Thyroid gland (tissue), 4 donors: ENCODE measurements at regions of chr12 and their contacts with region 1.

Region 1: DNA sequence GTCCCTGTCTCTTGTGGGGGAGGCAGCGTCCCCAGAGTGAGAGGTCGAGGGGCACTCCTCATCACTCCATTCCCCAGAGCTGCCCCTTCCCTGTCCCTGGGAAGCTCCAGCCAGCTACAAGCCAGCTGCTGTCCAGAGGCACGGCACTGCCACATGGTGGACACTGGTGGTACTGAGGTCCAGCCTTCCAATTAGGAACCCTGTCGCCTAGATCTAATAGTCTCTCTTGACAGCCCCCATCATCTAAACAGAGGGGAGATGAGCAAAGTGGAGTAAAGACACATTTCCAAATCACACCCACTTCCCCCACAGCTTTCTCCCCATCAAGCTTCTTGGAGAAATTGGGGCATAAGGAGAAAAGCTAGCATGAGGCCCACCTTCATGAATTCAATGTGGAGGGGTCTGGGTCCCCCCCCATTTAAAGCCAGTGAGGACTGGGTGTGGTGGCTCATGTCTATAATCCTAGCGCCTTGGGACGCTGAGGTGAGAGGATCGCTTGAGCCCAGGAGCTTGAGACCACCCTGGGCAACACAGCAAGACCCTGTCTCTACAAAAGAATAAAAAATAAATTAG is 2.1 kb upstream of the INHBE start:
- DNase-seq: peak; percentile 81
- H3K4me3 ChIP-seq: no peak overlapping the region
- H3K27ac ChIP-seq: no peak overlapping the region
- H3K4me1 ChIP-seq: no peaks in the 10 kb centered on the region
- H3K27me3 ChIP-seq: no peaks in the 10 kb centered on the region
- CTCF ChIP-seq: peak; percentile 76 to 95 (median 90)
- POLR2A ChIP-seq: no peak

Region 2: GRCh38 chr12:57268264-57268663 is 184.8 kb before region 1 on chr12:
- intact Hi-C with region 1: loop called (anchors 5 kb)
- DNase-seq: no peak
- H3K4me3 ChIP-seq: no peak overlapping the region
- H3K27ac ChIP-seq: no peak overlapping the region
- H3K4me1 ChIP-seq: peaks cover 10 to 12% of the 10 kb centered on the region in 2 donors
- H3K27me3 ChIP-seq: no peaks in the 10 kb centered on the region
- CTCF ChIP-seq: no peak
- POLR2A ChIP-seq: no peak

Region 3: DNA sequence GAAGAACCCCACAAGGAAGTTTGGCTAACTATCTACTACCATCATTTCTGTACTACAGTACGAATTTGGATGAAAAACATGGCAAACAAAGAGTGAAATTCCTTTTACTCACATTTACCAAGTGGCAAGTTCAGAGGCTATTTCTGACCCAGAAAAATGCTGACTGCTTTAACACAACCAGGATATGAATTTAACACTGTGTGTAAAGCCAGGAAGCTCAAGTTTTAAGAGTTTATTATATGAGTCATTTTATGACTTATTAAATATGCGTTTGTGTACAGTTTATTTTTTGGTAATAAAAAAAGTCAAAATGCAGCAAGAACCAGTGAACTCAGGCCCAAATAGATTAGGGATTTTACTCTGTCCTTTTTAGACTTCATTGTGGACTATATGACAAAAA is 143.6 kb before region 1 on chr12:
- intact Hi-C with region 1: loop called (anchors 5 kb)
- DNase-seq: no peak
- H3K4me3 ChIP-seq: no peak overlapping the region
- H3K27ac ChIP-seq: no peak overlapping the region
- H3K4me1 ChIP-seq: no peaks in the 10 kb centered on the region
- H3K27me3 ChIP-seq: no peaks in the 10 kb centered on the region
- CTCF ChIP-seq: no peak
- POLR2A ChIP-seq: no peak

Region 4: GRCh38 chr12:57368349-57369095 is 84.5 kb before region 1 on chr12:
- intact Hi-C with region 1: no loop called
- DNase-seq: no peak
- H3K4me3 ChIP-seq: no peak overlapping the region
- H3K27ac ChIP-seq: no peak overlapping the region
- H3K4me1 ChIP-seq: no peaks in the 10 kb centered on the region
- H3K27me3 ChIP-seq: no peaks in the 10 kb centered on the region
- CTCF ChIP-seq: no peak
- POLR2A ChIP-seq: no peak

Region 5: DNA sequence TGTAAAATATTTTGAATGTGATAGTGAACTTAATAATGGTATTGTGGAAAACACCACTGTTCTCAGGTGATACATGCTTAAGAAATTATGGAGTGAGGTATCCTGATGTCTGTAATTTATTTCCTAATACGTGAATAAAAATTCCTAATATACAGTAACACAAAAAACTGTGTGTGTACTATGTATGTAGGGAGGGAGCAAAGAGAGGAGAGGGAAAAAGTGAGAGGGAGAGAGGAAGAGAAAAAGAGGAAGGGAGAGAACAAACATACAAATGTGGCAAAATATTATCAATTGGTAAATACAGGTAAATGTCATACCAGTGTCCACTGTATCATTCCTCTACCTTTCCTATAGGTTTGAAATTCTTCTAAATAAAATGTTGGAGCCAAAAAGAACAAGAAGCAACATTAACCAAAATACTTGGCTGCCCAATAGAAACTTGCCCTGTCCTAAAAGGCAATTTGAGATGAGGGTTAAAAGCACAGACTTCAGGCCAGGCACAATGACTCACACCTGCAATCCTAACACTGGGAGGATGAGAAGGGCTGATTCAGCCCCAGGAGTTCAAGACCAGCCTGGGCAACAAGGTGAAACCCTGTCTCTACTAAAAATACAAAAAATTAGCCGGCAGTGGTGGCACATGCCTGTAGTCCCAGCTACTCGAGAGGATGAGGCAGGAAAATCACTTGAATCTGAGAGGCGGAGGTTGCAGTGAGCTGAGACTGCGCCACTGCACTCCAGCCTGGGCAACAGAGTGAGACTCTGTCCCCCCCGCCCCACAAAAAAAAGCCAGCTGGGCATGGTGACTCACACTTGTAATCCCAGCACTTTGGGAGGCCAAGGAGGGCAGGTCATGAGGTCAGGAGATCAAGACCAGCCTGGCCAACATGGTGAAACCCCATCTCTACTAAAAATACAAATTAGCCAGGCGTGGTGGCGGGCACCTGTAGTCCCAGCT is 36.7 kb before region 1 on chr12:
- intact Hi-C with region 1: no loop called
- DNase-seq: peak in 1 of 2 donors; percentile 14
- H3K4me3 ChIP-seq: no peak overlapping the region
- H3K27ac ChIP-seq: no peak overlapping the region
- H3K4me1 ChIP-seq: peaks cover 0 to 5% of the 10 kb centered on the region in 2 donors
- H3K27me3 ChIP-seq: no peaks in the 10 kb centered on the region
- CTCF ChIP-seq: no peak
- POLR2A ChIP-seq: no peak

Region 6: GRCh38 chr12:57712701-57713100 is 259.7 kb after region 1 on chr12:
- intact Hi-C with region 1: no loop called
- DNase-seq: no peak
- H3K4me3 ChIP-seq: no peak overlapping the region
- H3K27ac ChIP-seq: no peak overlapping the region
- H3K4me1 ChIP-seq: no peaks in the 10 kb centered on the region
- H3K27me3 ChIP-seq: no peaks in the 10 kb centered on the region
- CTCF ChIP-seq: no peak
- POLR2A ChIP-seq: no peak

Region 7: GRCh38 chr12:58046271-58046670 is 593.2 kb after region 1 on chr12:
- intact Hi-C with region 1: no loop called
- DNase-seq: no peak
- H3K4me3 ChIP-seq: no peak overlapping the region
- H3K27ac ChIP-seq: no peak overlapping the region
- H3K4me1 ChIP-seq: no peaks in the 10 kb centered on the region
- H3K27me3 ChIP-seq: no peaks in the 10 kb centered on the region
- CTCF ChIP-seq: no peak
- POLR2A ChIP-seq: no peak